GM10248 (cell line): ENCODE measurements at regions of chrX and their contacts with region 1.

Region 1: GRCh38 chrX:131827935-131828334 is 195.2 kb upstream of the STK26 start:
- DNase-seq: peak; percentile 28
- CTCF ChIP-seq: peak; percentile 25

Region 2: GRCh38 chrX:131816551-131817136 is 11.3 kb before region 1 on chrX:
- CTCF ChIA-PET with region 1: interaction called, 12 read pairs
- POLR2A ChIA-PET with region 1: no interaction called
- DNase-seq: peak; percentile 40
- CTCF ChIP-seq: peak; percentile 10

Region 3: DNA sequence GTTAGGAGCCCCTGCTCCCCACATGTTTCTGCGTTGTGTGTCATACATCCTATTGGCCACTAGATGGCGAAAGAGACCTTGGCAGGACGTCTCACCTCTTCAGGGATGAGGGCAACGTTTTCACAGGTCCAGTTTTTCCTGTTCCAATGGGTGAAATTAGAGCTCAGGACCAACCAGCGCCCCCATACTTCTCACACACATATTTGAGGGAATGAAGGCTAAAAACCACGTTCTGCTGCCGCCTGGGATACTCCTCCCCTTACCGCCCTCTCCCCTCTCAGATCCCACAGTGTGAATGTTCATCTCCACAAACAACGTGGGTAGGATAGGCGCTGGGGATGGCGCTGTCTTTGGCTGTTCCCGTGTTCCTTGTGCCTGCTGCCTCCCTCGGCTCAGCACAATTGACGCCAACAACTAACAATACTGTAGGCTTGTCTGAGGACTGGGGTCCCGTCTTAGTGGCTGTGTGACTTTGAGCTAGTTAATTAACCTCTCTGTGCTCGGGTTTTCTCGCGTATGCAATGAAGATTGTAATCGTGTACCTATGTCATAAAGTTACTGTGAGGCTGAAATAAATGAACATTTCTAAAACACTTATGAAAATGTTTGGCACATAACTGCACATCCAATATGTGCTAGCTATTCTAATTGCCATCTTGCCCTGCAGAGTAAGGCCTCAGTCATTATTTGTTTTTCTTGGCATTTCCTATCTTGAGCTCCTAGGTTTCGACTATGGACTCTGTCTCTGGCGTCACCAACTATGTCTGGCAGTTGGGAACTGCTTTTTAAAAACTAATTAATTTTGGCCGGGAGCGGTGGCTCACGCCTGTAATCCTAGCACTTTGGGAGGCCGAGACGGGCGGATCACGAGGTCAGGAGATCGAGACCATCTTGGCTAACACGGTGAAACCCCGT is 13.8 kb after region 1 on chrX:
- CTCF ChIA-PET with region 1: interaction called, 15 read pairs
- POLR2A ChIA-PET with region 1: no interaction called
- DNase-seq: peak; percentile 69
- CTCF ChIP-seq: peak; percentile 73